OCI-LY7 (cell line): ENCODE measurements at regions of chr11 and their contacts with region 1.

Region 1: DNA sequence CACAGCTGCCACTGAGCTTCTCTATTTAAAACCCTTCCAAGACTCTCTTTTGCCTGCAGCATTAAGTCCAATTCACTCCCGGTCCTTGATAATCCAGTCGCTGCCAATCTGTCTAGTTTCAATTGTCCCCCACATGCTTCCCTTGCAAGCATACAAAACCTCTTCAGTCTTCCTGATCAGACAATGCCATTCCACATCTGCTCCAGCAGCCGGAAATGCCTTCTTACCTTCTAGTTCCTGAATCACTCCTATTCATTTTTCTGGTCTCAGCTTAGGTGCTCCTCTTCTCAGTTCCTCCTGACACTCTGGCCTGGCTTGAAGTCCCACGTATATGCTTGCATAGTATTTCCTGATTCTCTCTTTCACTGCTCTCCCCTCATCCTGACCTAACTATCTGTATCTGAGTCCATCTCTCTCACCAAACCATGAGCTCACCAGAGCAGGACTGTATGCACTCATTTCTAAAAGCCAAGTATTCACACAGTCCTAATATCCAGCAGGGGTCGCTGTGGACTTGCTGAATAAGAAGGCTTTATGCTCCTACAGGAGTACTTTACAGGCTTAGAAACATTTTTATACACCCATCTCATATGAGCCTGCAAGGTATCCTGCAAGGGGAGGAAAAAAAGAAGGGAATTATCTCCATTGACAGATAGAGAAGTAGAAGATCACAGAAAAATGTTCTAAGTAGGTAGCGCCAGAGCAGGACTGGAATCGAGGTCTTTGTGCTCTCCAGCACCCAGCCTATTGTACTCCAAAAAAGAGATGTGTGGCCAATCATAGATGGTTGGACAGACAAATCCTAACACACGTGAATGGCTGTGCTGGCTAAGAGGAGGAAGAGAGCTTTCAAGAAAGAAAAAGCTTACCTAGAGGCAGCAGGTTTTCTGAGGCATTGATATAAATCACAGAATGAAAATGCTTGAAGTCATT is 19.2 kb downstream of the XRRA1 start:
- DNase-seq: peak; percentile 91
- H3K4me3 ChIP-seq: no peak overlapping the region
- H3K27ac ChIP-seq: no peak overlapping the region
- H3K4me1 ChIP-seq: no peaks in the 10 kb centered on the region
- CTCF ChIP-seq: peak; percentile 99

Region 2: GRCh38 chr11:74870485-74870884 is 59.2 kb before region 1 on chr11:
- CTCF ChIA-PET with region 1: no interaction called
- POLR2A ChIA-PET with region 1: no interaction called
- intact Hi-C with region 1: no loop called
- DNase-seq: peak; percentile 63
- H3K4me3 ChIP-seq: no peak overlapping the region
- H3K27ac ChIP-seq: no peak overlapping the region
- H3K4me1 ChIP-seq: no peaks in the 10 kb centered on the region
- CTCF ChIP-seq: peak; percentile 80

Region 3: GRCh38 chr11:75031771-75032549 is 102.3 kb after region 1 on chr11:
- CTCF ChIA-PET with region 1: no interaction called
- POLR2A ChIA-PET with region 1: no interaction called
- intact Hi-C with region 1: loop called (anchors 1 kb)
- DNase-seq: peak; percentile 73
- H3K4me3 ChIP-seq: no peak overlapping the region
- H3K27ac ChIP-seq: no peak overlapping the region
- H3K4me1 ChIP-seq: peaks cover 13% of the 10 kb centered on the region
- CTCF ChIP-seq: peak; percentile 84

Region 4: DNA sequence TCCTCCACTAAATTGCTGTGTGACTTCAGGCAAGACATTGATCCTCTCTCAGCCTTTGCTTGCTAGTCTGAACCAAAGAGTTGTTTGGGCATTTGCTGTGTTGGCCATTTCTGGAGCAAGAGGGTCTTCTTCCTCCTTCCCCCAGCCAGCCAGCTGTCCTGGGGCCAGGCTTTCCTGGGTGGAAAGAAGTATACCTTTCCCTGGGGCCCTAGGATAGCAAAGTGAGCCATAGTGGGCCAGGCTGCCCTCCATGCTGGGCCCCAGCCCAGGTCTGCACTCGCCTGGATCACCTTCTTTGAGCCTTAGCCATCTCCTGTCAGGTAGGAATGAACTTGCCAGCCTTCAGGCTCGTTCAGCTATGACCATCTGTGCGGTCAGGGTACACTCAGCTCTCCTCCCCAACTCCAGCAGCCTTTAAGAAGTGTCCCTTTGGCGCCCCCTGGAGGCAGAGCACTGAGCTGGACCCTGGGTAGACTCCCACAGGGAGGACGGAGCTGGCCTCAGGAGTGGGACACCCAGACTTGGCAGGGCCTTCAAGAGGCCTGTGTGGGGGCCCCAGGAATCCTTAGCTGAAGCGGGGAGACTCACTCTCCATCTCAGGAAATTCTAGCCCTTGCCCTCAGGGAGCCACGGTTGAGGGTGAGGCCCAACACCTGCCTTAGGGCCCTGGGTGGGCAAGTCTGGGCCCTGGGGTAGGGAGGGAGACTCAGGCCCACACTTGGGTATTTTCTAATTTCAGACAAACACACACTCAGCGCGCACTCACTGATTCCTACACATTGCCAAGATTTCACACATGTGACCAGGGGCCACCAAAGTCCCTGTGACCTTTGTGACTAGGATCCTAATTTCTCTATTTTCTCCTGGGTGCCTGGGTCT is 275.2 kb after region 1 on chr11:
- CTCF ChIA-PET with region 1: interaction called, 5 read pairs
- POLR2A ChIA-PET with region 1: no interaction called
- intact Hi-C with region 1: loop called (anchors 1 kb)
- DNase-seq: peak; percentile 82
- H3K4me3 ChIP-seq: no peak overlapping the region
- H3K27ac ChIP-seq: no peak overlapping the region
- H3K4me1 ChIP-seq: peaks cover 8% of the 10 kb centered on the region
- CTCF ChIP-seq: peak; percentile 95